ENCODE measurements at regions of chr14 and their contacts with region 1.

Region 1: DNA sequence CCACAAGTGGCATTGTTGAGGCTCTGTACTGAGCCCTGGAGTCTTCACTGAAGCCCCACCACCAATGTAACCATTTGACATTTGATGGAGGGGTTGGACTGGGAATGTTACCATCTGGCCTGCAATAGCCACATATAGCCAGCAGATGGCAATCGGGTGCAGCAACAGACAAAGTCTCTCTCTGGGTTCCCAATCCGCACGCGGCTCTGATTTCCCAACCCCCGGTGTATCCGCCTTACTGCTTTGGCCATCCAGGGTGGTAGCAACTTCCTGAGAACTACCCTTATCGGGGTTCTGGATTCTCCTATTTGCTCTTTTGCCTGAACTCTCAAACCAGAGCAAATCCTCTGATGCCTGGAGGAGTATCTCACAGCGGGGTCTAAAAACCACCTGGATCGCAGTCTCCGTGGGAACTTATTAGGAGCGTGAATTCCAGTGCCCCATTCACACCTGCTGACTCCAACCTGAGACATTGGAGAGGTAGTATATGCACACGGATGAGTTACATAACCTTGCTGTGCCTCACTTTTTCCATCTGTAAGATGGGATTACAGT is 14.2 kb downstream of the VRTN start:
- DNase-seq: peak; percentile 83 to 90
- ATAC-seq: peak; percentile 85 to 92 (median 90)
- H3K4me3 ChIP-seq: no peak overlapping the region
- H3K27ac ChIP-seq: no peak overlapping the region
- H3K4me1 ChIP-seq: no peaks in the 10 kb centered on the region
- H3K27me3 ChIP-seq: peaks cover 0 to 8% (median 4%) of the 10 kb centered on the region in 3 donors
- CTCF ChIP-seq: peak; percentile 92

Region 2: DNA sequence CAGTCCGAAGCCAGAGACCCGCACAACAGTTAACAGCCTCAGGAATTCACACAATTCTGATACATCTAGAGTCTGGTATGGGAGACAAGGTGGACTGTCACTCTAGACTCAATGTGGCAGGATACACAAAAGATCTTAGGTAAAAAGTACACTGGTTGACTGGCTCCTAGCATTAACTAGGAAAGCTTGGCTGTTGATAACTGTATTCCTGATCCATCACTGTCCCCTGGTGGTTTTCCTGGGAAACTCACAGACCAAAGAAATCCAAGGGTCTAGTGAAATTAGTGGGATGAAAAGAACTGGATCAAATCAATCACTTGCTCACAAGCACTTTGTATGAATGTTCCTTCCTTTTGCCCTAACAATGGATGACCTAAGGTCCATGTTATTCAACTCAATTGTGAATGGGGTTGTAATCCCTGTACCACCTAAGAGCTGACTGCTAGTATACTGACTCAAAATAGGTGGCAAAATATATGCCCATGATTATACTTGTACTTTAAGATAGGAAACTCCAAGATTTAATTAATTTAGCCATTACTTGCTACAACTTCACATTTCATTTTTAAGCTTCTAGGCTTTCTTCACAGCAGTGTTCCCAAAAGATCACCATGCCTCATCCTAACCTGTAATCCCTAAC is 116.7 kb after region 1 on chr14:
- intact Hi-C with region 1: loop called in 1 of 2 experiments (anchors 2 kb)
- DNase-seq: no peak
- ATAC-seq: no peak
- H3K4me3 ChIP-seq: no peak overlapping the region
- H3K27ac ChIP-seq: no peak overlapping the region
- H3K4me1 ChIP-seq: peaks cover 24% of the 10 kb centered on the region
- H3K27me3 ChIP-seq: no peaks in the 10 kb centered on the region
- CTCF ChIP-seq: peak; percentile 72

Region 3: DNA sequence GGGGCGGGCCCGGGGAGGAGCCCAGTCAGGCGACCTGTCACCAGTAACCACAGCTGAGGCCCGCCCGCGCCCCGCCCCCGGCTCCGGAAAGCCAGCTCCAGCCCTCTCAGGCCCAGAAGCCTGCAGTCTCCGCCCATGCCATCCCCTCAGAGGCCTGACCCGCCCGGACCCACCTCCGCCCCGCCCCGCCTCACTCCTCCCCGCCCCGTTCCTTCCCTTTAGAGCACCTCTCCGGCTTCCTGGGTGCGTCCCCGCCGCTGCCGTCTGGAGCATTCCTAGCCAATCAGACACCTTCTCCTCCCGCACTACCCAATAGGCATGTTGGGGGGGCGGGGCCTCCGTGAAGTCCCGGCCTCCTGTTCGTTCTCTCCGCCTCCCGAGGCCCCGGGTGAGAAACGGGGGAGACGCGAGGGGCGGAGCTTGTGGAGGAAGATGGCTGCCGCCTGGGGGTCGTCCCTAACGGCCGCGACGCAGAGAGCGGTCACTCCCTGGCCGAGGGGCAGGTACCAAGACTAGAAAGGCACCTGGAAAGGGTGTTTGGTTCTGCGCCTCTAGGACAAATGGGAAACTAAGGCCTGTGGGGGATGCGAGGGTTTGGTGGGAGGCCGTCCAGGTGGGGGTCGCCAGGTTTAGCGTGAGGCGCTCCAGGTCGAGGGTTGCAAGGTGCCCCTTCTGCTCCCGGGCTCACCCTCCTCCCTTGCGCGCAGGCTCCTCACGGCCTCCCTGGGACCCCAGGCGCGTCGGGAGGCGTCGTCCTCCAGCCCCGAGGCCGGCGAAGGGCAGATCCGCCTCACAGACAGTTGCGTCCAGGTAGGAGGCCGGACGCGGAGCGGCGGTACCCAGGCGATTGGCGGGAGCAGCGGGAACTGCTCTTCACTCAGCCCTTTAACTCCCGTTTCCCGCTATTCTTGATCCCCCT is 131.2 kb after region 1 on chr14 and contains the start of gene ISCA2:
- intact Hi-C with region 1: loop called in 1 of 2 experiments (anchors 5 kb)
- DNase-seq: peak; percentile 100
- ATAC-seq: peak; percentile 95 to 97 (median 96)
- H3K4me3 ChIP-seq: peak within 1 kb of the TSS; percentile 82
- H3K27ac ChIP-seq: peak within 1 kb of the TSS; percentile 87
- H3K4me1 ChIP-seq: peaks cover 22% of the 10 kb centered on the region
- H3K27me3 ChIP-seq: no peaks in the 10 kb centered on the region
- CTCF ChIP-seq: no peak
- total RNA-seq, gene ISCA2: 24.5 to 38.8 (median 26.0) TPM